Left cardiac atrium (tissue), 4 donors: ENCODE measurements at regions of chr5 and their contacts with region 1.

Region 1: DNA sequence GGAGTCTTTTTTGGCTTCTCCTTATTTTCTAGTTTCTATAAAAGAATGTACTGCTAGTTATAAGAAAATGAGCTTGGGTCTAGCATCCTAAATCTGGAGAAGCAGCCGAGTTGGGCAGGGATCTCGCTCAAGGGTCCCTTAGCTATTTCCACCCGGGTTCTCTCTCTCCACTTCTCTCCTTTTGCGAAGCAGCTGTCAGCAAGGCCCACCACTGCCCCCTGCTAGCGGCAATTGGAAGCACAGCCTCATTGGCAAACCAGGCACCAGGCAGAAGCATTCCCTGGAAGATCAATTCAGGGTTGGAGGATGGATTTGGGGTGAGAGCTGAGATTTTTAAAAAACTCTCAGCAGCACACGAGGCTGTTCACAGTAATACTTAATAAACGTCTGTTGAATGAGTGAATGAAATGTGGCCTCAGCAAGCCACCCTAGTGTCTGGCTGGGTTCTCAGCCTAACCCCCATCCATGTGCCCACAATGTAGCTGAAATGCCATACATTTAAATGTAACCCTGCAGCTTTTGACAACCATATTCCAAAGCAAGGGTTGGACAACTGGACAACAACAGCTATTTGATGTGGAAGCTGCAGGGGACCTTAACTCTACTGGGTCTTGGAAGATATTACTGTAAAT is 34.6 kb upstream of the TNIP1 start:
- DNase-seq: peak; percentile 76
- ATAC-seq: peak; percentile 58 to 77

Region 2: DNA sequence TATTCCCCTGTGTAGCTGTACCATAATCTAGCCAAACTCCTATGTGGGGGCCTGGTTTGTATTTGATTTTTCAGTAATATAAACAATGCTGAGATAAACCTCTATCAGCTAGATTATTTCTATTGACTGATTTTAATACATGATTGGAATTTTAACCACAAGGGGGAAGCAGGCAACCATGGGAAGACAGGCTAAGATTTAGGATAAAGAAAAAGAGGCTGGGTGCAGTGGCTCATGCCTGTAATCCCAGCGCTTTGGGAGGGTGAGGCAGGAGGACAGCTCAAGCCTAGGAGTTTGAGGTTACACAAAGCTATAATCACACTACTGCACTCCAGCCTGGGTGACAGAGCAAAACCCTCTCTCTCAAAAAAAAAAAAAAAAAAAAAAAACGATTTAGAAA is 113.1 kb before region 1 on chr5:
- intact Hi-C with region 1: loop called in 1 of 2 experiments (anchors 2 kb)
- DNase-seq: no peak
- ATAC-seq: peak in 1 of 2 donors; percentile 7

Region 3: DNA sequence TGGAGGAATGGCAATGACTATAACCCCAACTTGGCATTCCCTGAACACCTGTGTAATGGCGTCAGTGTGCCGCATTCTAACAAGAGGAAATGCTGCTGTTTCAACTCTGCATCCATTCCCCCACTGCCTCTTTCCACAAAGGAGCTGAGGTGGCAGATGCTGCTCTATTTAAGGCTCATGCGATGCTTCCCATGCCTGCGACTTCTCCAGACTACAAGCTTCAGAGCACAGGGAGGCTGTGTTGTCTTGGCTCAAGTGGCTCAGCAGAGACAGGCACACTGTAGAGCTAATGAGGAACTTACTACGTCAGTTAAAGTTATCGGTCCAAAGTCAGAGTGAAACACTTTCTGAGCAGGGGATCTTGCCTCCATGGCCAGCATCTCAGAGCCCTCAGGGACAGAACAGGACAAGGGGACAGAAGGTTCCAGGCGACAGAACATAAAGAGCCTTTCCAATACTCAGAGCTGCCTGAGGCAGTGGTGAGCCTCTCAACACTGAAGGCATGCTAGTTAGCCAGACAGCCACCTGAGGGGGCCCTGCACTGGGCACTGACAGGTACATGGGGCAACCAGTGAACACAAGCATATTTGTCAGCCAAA is 56.4 kb before region 1 on chr5:
- intact Hi-C with region 1: loop called in 1 of 2 experiments (anchors 2 kb)
- DNase-seq: no peak
- ATAC-seq: peak in 1 of 2 donors; percentile 16